H1 (cell line): ENCODE measurements at regions of chr17 and their contacts with region 1.

Region 1: GRCh38 chr17:45135192-45135977 is at the start of gene ACBD4:
- DNase-seq: peak; percentile 87 to 99
- H3K4me3 ChIP-seq: peak within 1 kb of the TSS; percentile 26 to 65 (median 58)
- H3K27ac ChIP-seq: no peak within 1 kb of the TSS
- H3K4me1 ChIP-seq: peaks cover 0 to 6% (median 2%) of the 10 kb centered on the region in 4 experiments; a peak in 3 of 7 replicates
- H3K27me3 ChIP-seq: no peaks in the 10 kb centered on the region
- CTCF ChIP-seq: peak; percentile 100
- EP300 ChIP-seq: peak in 1 of 2 experiments; percentile 41; a peak in 1 of 3 replicates
- POLR2A ChIP-seq: 0 out of 3 replicates have a peak, but pooled peaks of 1 of the 2 experiments have one; percentile 43
- RAD21 ChIP-seq: peak; percentile 94 to 95
- total RNA-seq, gene ACBD4: 9.3 and 10.7 TPM in 2 replicates

Region 2: DNA sequence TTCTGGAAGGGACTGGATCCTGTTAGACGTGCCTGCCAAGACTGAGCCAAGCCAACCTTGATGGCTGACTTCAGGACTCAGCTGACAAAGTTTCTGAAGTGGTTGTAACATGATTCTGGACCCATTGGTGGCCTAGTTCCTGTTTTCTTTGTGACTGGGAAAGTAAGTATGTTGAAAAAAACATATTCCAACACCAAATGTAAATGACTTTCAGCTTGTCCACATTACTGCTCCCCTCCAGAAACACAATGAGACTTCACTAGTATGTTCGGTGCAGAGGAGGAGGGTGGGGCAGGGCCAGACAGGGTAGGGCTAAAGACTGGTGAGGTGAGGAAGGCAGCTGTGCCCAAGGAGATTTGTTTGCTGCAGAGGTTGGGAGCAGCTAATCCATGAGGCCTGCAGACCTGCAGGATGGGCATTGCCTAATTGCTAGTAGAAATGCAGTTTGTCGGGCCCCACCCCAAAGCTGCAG is 47.8 kb before region 1 on chr17:
- CTCF ChIA-PET with region 1: interaction called, 14 read pairs
- POLR2A ChIA-PET with region 1: no interaction called
- DNase-seq: no peak
- H3K4me3 ChIP-seq: no peak overlapping the region
- H3K27ac ChIP-seq: no peak overlapping the region
- H3K4me1 ChIP-seq: peaks cover 0 to 7% (median 0%) of the 10 kb centered on the region in 4 experiments; a peak in 3 of 7 replicates
- H3K27me3 ChIP-seq: no peaks in the 10 kb centered on the region
- CTCF ChIP-seq: no peak
- EP300 ChIP-seq: no peak
- POLR2A ChIP-seq: no peak
- RAD21 ChIP-seq: no peak

Region 3: DNA sequence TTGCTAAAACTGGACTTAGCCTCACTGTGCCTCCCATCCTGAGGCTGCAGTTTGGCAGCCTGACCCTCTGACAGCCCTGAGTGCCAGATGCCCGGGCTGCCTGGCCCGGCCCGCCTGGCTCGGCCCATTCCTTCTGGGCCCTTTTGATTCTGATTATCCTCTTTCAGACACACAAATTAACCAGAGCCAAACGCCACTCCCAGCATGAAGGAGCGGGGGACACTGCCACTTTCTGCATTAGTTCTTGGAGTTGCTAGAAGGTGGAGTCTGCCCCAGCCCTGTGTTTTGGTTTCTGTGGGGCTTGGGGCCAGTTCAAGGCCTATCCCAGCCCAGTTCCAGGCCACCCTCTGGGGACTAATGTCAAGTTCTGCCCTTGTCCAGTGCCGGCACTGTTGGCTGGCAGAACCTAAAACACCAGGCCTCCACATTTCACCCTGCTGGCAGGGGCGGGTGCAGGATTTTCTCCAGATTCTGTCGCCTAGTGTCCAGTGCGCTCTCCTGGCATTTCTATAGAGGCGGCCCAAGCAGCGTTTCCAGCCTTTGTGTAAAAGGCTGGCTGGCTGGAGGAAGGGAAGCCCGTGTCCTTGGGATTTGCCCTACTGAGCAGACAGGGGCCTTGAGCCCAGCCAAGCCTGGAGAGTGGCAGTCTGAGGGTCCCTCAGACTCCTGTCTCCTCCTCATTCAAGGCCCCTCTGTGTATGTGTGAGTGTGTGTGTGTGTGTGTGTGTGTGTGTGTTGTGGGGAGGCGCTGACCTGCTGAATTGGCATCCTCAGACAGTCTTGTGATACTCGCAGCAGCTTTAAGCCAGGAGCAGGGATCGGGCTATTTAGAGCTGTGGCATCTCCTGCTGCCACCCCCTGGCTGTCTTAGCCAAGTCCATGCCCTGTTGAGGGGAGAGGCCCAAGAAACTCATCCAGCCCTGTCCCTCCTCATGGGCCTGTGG is 24.4 kb before region 1 on chr17:
- CTCF ChIA-PET with region 1: interaction called, 24 read pairs
- POLR2A ChIA-PET with region 1: interaction called, 3 read pairs
- DNase-seq: no peak
- H3K4me3 ChIP-seq: no peak overlapping the region
- H3K27ac ChIP-seq: no peak overlapping the region
- H3K4me1 ChIP-seq: peaks cover 0 to 9% (median 4%) of the 10 kb centered on the region in 4 experiments; a peak in 3 of 7 replicates
- H3K27me3 ChIP-seq: no peaks in the 10 kb centered on the region
- CTCF ChIP-seq: no peak
- EP300 ChIP-seq: no peak
- POLR2A ChIP-seq: no peak
- RAD21 ChIP-seq: no peak

Region 4: DNA sequence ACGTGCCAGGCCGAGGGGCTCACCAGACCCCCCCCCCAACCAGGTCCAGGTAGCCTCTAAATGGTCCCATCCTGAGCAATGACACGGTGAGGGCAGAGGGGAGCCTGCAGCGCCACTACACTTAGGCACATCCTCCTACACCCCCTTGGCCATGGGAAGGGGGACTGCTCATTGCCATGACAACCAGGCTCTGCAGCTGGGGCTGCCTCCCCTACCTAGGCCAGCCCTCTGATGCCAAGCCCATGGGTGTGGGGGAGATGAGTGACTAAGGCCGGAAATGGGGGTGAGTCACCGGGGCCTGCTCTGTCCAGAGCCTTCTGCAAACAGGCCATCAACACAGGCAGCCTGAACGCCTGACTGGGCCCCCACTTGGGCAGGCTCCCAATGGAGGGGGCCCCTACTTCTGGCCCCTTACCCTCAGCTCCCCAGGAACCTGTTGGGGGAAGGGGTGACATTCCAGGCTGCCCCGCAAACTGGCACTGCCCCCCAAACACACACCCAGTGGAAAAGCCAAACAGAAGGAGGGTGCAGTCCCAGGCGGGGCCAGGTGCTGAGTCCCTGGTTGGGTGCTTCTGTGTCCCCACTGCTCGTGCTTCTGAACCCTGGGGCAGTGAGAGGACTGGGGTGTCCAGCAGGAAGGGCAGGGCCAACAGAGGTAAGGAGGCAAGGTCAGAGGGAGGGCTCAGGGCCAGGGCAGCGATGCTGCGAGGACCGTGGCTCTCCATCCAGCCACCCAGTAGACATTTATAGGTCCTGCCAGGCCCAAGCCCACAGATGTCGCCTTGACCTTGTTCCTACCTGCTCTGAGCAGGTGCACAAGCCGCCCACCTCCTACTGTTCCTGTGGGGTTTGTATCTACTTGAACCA is 11.2 kb before region 1 on chr17:
- CTCF ChIA-PET with region 1: interaction called, 21 read pairs
- POLR2A ChIA-PET with region 1: interaction called, 8 read pairs
- DNase-seq: no peak
- H3K4me3 ChIP-seq: no peak overlapping the region
- H3K27ac ChIP-seq: no peak overlapping the region
- H3K4me1 ChIP-seq: peaks cover 0 to 18% (median 10%) of the 10 kb centered on the region in 4 experiments; a peak in 5 of 7 replicates
- H3K27me3 ChIP-seq: no peaks in the 10 kb centered on the region
- CTCF ChIP-seq: no peak
- EP300 ChIP-seq: no peak
- POLR2A ChIP-seq: no peak
- RAD21 ChIP-seq: no peak

Region 5: DNA sequence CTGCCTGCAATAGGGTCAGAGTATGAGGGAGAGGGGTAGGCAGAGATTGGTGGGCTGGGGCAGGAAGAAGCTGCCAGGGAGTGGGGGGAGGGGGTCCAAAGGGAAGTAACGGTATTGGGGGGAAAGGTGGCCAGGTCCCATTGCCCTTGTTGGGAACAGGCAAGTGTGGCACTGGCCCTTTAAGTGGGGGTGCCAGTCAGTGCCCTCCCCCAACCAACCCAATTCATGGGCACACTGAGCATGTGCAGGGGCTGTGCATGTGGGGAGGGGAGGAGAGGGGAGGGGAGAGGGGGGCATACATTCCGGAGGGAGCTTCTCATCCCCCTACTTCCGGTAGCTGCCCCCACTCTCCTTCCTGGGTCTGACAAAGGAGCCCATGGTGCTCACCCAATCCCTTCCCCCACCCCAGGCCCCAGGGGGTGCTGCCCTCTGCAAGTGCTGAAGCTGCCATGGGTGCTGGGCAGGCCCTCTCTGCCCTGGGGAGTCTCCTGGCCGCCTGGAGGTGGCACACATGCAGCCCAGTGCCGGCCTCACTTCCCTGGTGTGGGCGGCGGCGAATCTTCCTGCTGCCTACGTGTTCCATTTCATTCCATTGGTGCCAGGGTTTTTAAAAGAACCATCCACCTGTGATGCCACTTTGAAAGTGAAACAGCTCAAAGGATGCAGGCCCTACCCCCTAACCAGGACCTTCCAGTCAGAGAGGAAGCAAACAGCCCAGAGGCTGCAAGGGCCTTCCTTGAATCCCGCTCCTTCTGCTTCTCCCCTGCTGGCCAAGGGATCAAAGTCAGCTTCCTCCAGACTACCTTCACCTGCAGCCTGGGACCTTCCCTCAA is 37.3 kb after region 1 on chr17:
- CTCF ChIA-PET with region 1: interaction called, 36 read pairs
- POLR2A ChIA-PET with region 1: interaction called, 9 read pairs
- DNase-seq: peak in 1 of 2 experiments; percentile 70
- H3K4me3 ChIP-seq: peak overlapping the region in 3 of 4 experiments; percentile 4 to 28 (median 10); a peak in 3 of 8 replicates
- H3K27ac ChIP-seq: peak overlapping the region; percentile 64
- H3K4me1 ChIP-seq: peaks cover 5 to 29% (median 26%) of the 10 kb centered on the region in 4 experiments
- H3K27me3 ChIP-seq: no peaks in the 10 kb centered on the region
- CTCF ChIP-seq: peak in 1 of 3 experiments; percentile 20; a peak in 1 of 4 replicates
- EP300 ChIP-seq: no peak
- POLR2A ChIP-seq: no peak
- RAD21 ChIP-seq: no peak

Region 6: DNA sequence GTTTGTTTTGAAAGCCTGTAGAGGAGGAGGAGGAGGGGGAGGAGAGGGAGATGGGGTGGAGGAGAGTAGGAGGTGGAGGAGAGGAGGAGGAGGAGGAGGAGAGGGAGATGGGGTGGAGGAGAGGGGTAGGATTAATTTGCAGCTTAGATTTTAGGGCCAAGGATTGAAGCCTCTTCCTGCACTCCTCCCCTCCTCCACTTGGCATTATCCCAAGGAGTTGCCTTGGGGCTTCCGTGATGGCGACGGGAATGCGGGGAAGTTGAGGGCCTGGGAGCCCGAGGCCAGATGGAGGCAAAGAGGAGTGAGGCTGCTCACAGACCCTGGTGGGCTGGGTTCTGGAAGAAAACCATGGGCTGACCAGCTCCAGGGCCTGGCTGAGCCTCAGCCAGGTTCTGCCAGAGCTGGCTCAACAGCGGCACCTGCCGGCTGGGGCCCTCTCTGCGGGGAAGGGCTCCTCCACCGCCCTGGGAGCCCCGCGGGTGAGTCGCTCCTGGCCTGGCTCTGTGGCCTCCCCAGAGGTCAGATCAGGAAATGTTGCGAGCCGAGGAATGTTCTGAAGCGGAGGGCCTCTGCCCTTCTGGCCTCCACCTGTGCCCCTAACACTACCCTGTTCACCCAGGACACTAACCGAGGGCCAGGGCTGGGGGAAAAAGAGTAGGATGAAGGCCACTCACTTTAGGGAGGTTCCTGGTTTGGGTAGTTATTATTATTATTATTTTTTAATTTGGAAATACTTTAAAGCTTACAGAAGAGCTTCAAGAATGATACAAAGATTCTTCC is 62.4 kb after region 1 on chr17:
- CTCF ChIA-PET with region 1: interaction called, 156 read pairs
- POLR2A ChIA-PET with region 1: interaction called, 13 read pairs
- DNase-seq: peak; percentile 90 to 100
- H3K4me3 ChIP-seq: peak overlapping the region in 1 of 4 experiments; percentile 35; a peak in 2 of 8 replicates
- H3K27ac ChIP-seq: no peak overlapping the region
- H3K4me1 ChIP-seq: peaks cover 2 to 9% (median 7%) of the 10 kb centered on the region in 4 experiments; a peak in 5 of 7 replicates
- H3K27me3 ChIP-seq: no peaks in the 10 kb centered on the region
- CTCF ChIP-seq: peak; percentile 97 to 99 (median 99)
- EP300 ChIP-seq: peak in 1 of 2 experiments; percentile 55; a peak in 1 of 3 replicates
- POLR2A ChIP-seq: 0 out of 3 replicates have a peak, but pooled peaks of 1 of the 2 experiments have one; percentile 48
- RAD21 ChIP-seq: peak; percentile 93 to 100

Region 7: DNA sequence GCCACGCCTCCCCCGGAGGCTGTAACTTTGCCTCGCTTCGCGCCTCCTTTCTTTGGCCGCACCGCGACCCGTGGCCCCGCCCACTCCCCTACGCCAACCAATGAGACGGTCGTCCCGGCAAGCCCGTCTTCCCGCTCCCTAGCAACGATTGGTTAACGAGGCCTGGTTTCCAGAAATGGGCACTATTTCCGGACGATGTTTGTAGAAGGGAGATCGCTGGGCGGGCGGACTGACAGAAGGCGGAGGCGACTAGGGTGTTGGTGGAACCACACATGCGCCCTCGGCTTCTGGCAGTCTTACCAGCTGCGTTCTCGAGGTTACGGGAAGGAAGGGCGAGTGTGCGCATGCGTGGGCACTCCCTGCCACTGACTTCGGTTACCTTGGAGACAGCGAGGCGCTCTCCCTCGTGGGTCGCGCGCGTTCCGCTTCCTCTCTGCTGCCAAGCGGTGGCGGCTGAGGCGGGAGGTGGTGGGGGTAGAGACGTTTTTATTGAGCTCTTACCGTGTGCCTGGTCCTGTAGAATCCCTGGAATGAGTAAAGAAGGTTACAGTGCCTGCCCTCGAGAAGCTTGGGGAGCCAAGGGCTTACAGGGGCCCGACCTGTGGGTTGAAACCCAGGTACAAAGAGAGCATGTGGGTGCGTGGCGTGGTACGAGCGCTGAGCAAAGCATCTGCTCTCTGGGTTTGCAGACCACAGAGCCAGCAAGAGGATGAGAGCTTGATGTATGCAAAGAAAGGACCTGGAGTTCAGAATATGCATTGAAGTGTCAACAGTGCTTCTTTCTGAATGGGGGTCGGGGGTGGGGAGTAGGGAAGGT is 181.9 kb after region 1 on chr17:
- CTCF ChIA-PET with region 1: no interaction called
- POLR2A ChIA-PET with region 1: no interaction called
- DNase-seq: peak; percentile 99
- H3K4me3 ChIP-seq: peak overlapping the region; percentile 49 to 84 (median 76)
- H3K27ac ChIP-seq: no peak overlapping the region; the same call in 1 of the 2 replicates
- H3K4me1 ChIP-seq: peaks cover 0 to 5% (median 3%) of the 10 kb centered on the region in 4 experiments; a peak in 6 of 7 replicates
- H3K27me3 ChIP-seq: peaks cover 0 to 2% (median 0%) of the 10 kb centered on the region in 4 experiments; a peak in 3 of 7 replicates
- CTCF ChIP-seq: no peak
- EP300 ChIP-seq: no peak
- POLR2A ChIP-seq: 0 out of 3 replicates have a peak, but pooled peaks of 1 of the 2 experiments have one; percentile 14
- RAD21 ChIP-seq: no peak; a peak in 1 of 4 replicates

Region 8: GRCh38 chr17:45411348-45412105 is 276.1 kb after region 1 on chr17:
- CTCF ChIA-PET with region 1: no interaction called
- POLR2A ChIA-PET with region 1: no interaction called
- DNase-seq: no peak
- H3K4me3 ChIP-seq: no peak overlapping the region
- H3K27ac ChIP-seq: no peak overlapping the region
- H3K4me1 ChIP-seq: peaks cover 0 to 17% (median 8%) of the 10 kb centered on the region in 4 experiments; a peak in 5 of 7 replicates
- H3K27me3 ChIP-seq: no peaks in the 10 kb centered on the region
- CTCF ChIP-seq: no peak
- EP300 ChIP-seq: no peak
- POLR2A ChIP-seq: no peak
- RAD21 ChIP-seq: no peak